CD4-positive, alpha-beta T cell (primary cell): ENCODE measurements at regions of chr17 and their contacts with region 1.

Region 1: DNA sequence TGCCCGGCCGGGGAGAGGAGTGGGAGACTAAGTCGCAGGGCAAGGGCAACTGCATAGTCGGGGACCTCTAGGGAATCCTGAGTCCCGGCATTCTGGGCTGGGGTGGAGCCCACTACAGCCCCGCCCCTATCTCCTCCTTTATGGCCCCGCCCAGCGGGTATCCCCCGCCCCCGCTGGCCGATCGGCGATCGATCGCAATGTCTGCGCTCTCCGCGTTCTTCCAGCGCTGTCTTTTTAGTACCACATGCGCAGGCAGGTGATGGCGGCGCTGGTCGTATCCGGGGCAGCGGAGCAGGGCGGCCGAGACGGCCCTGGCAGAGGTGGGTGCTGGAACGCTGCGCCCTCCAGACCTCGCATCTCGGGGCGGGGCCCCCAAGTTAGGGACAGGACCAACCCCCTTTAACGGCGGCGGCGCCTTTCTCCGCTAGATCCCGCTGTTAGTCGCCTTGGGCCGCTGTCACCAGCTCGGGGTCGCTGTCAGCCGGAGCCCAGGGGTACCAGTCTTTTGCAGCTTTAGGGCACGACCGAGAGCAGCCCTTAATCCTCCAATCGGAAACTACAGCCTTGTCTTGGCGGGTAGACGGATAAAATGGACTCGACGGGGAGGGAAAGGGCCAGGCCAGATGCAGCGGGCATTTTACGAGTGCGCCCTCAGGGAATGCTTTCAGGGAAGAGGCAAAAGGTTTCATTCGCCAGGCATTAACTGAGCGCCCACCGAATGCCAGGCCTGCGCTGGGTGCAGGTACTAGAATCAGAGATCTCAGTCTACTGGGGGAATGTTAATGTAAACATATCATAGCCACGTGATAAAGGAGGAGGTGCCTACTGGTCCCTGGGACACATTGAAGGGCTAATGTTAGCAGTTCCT is at the start of gene DPH1:
- DNase-seq: peak; percentile 74 to 92 (median 81)
- ATAC-seq: peak; percentile 82
- H3K4me3 ChIP-seq: peak within 1 kb of the TSS; percentile 100
- H3K4me3 Mint-ChIP-seq: peak within 1 kb of the TSS; percentile 94
- H3K27ac ChIP-seq: peak within 1 kb of the TSS; percentile 60 to 70
- H3K27ac Mint-ChIP-seq: peak within 1 kb of the TSS; percentile 86
- H3K4me1 ChIP-seq: peaks cover 45% of the 10 kb centered on the region
- H3K4me1 Mint-ChIP-seq: peaks cover 34% of the 10 kb centered on the region
- H3K27me3 ChIP-seq: peaks cover 12 to 16% of the 10 kb centered on the region in 2 experiments
- H3K27me3 Mint-ChIP-seq: peaks cover 26% of the 10 kb centered on the region
- CTCF ChIP-seq: no peak
- total RNA-seq, gene DPH1: 96.4 to 101 TPM

Region 2: DNA sequence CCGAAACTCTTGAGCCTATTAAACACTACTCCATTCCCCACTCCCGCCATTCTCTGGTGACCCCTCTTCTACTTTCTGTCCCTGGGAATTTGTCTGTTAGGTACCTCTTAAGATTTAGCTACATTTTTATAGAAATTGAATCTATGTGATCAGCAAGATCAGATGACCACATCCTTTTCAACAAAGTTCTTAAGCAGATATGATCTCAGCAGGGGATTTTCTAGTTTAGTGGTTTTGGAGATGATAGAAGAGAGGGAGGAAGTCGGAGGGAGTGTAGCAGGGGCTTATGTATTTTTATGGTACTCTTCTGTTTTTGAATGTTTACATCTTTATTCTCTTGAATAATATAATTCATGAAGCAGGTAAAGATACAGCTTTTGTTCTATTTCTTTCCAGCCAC is 159.6 kb before region 1 on chr17:
- CTCF ChIA-PET with region 1: no interaction called
- POLR2A ChIA-PET with region 1: no interaction called
- intact Hi-C with region 1: loop called in 1 of 2 experiments (anchors 5 kb)
- DNase-seq: peak in 3 of 14 experiments; percentile 82 to 84 (median 83)
- ATAC-seq: peak; percentile 65
- H3K4me3 ChIP-seq: no peak overlapping the region
- H3K4me3 Mint-ChIP-seq: peak overlapping the region; percentile 32
- H3K27ac ChIP-seq: peak overlapping the region; percentile 58 to 70
- H3K27ac Mint-ChIP-seq: peak overlapping the region; percentile 84
- H3K4me1 ChIP-seq: peaks cover 48% of the 10 kb centered on the region
- H3K4me1 Mint-ChIP-seq: peaks cover 50% of the 10 kb centered on the region
- H3K27me3 ChIP-seq: no peaks in the 10 kb centered on the region
- H3K27me3 Mint-ChIP-seq: no peaks in the 10 kb centered on the region
- CTCF ChIP-seq: no peak

Region 3: DNA sequence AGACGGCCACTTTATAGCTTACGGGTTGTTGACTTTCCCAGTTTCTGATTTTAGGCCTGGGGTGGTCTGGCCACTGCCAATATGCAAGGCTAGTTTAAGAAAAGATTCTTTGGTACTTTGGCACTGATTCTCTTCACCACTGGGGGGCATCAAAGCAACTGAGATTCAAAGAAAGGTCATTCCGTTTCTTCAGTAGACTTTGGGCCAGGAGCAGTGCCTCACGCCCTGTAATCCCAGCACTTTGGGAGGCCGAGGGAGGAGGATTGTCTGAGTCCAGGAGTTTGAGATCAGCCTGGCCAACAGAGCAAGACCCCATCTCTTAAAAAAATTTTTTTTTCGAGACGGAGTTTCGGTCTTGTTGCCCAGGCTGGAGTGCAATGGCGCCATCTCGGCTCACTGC is 147.3 kb before region 1 on chr17:
- CTCF ChIA-PET with region 1: no interaction called
- POLR2A ChIA-PET with region 1: no interaction called
- intact Hi-C with region 1: loop called in 1 of 2 experiments (anchors 5 kb)
- DNase-seq: peak in 6 of 14 experiments; percentile 5 to 50 (median 45)
- ATAC-seq: no peak
- H3K4me3 ChIP-seq: no peak overlapping the region
- H3K4me3 Mint-ChIP-seq: no peak overlapping the region
- H3K27ac ChIP-seq: no peak overlapping the region
- H3K27ac Mint-ChIP-seq: no peak overlapping the region
- H3K4me1 ChIP-seq: no peaks in the 10 kb centered on the region
- H3K4me1 Mint-ChIP-seq: no peaks in the 10 kb centered on the region
- H3K27me3 ChIP-seq: no peaks in the 10 kb centered on the region
- H3K27me3 Mint-ChIP-seq: no peaks in the 10 kb centered on the region
- CTCF ChIP-seq: peak; percentile 42

Region 4: DNA sequence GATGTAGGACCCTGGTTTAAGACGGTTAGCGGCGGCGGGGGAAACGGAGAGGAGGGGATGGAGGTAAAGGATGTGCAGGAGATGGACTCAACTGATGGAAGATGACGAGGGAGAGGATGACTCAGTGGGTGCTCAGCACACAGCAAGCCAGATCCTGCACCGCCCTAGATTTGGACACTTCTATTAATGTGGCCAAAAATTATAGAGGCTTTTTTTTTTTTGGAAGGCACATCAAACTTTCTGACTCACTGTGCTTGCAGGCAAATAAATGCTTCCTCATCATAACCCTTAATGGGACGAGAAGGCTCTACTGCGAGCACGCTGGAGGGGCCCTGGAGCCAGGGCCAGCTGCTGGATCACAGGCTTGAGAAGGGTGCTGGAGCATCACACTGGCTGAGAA is 41.0 kb before region 1 on chr17:
- CTCF ChIA-PET with region 1: no interaction called
- POLR2A ChIA-PET with region 1: no interaction called
- intact Hi-C with region 1: no loop called
- DNase-seq: no peak
- ATAC-seq: no peak
- H3K4me3 ChIP-seq: no peak overlapping the region
- H3K4me3 Mint-ChIP-seq: no peak overlapping the region
- H3K27ac ChIP-seq: no peak overlapping the region
- H3K27ac Mint-ChIP-seq: no peak overlapping the region
- H3K4me1 ChIP-seq: no peaks in the 10 kb centered on the region
- H3K4me1 Mint-ChIP-seq: no peaks in the 10 kb centered on the region
- H3K27me3 ChIP-seq: no peaks in the 10 kb centered on the region
- H3K27me3 Mint-ChIP-seq: peaks cover 10% of the 10 kb centered on the region
- CTCF ChIP-seq: no peak